WTC11 (cell line): ENCODE measurements at regions of chr18 and their contacts with region 1.

Region 1: DNA sequence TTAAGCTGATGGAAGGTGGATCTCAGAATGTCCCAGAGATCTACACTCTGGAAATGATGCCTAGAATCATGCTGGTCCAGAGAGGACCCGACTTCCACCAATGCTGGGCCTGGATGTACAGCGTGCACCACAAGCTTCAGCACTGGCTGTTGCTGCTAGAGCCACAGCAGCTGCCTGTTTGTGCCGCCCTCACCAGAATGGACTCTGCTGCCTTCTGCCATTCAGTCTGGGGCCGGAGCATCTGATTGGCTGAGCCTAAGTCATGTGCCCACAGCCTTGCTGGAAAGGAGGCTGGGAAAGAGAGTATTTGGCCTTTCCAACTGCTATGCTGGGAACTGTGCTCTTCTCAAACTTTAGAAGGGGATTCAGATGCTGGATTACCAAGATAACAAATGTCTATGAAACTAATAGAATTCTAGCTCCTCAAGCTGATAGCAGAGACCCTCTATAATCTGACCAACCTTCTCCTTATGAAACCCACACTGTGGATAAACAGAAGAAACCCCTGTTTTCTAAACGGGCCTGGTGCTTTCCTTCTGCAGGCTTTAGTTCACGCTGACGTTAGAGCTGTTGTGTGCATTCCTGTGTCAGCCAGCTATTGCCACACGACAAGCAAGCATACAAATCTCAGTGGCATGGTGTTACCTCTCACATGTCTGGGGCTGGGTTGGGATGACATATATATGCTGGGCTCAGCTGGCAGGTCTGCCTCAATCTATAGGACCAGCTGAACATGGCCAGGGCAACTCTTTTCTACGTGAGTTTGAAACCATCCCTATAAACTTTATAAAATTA is 4.1 kb upstream of the LOXHD1 start:
- DNase-seq: peak; percentile 67
- ATAC-seq: peak; percentile 62
- H3K4me3 Mint-ChIP-seq: no peak overlapping the region
- H3K27ac Mint-ChIP-seq: no peak overlapping the region
- H3K4me1 Mint-ChIP-seq: peaks cover 19% of the 10 kb centered on the region
- H3K27me3 Mint-ChIP-seq: peaks cover 7% of the 10 kb centered on the region
- CTCF ChIP-seq: no peak

Region 2: GRCh38 chr18:46320928-46321711 is 340.0 kb before region 1 on chr18:
- CTCF ChIA-PET with region 1: interaction called, 12 read pairs
- POLR2A ChIA-PET with region 1: no interaction called
- DNase-seq: no peak
- ATAC-seq: no peak
- H3K4me3 Mint-ChIP-seq: no peak overlapping the region
- H3K27ac Mint-ChIP-seq: no peak overlapping the region; the same call in 1 of the 2 replicates
- H3K4me1 Mint-ChIP-seq: peaks cover 35% of the 10 kb centered on the region
- H3K27me3 Mint-ChIP-seq: no peaks in the 10 kb centered on the region; the same call in 1 of the 2 replicates
- CTCF ChIP-seq: no peak

Region 3: GRCh38 chr18:46445914-46446313 is 215.2 kb before region 1 on chr18:
- CTCF ChIA-PET with region 1: interaction called, 13 read pairs
- POLR2A ChIA-PET with region 1: no interaction called
- DNase-seq: no peak
- ATAC-seq: no peak
- H3K4me3 Mint-ChIP-seq: no peak overlapping the region
- H3K27ac Mint-ChIP-seq: no peak overlapping the region
- H3K4me1 Mint-ChIP-seq: peaks cover 33% of the 10 kb centered on the region
- H3K27me3 Mint-ChIP-seq: peaks cover 12% of the 10 kb centered on the region
- CTCF ChIP-seq: no peak

Region 4: DNA sequence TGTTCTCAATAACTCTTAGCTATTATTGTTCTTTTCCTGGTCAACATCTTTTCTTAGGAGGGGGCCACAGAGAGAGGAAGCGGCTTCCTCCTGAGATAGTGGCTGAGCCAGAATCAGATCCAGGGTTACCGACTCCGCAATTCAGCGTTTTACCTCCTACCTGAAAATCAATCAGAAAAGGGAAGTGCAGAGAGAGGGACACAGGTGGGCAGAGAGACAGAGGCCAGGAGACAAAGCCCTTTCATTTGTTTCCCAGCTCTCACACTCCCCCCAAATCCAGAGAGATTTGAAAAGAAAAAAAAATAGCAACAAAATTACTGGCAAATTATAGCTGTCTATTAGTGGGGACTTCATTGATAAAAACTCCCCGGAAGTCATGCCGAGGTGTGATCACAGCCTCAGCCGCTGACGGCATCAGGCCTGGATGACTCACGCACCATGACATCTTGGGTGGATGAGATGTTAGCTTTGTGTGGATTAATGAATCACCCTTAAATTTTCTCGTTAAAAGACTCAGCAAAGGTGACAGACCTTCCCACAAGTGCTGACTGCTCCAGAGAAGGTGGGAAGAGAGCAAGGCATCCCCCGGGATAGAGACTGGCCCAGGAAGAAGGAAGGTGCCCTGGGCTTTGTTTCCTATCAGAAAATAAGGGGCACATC is 124.8 kb before region 1 on chr18:
- CTCF ChIA-PET with region 1: interaction called, 20 read pairs
- POLR2A ChIA-PET with region 1: no interaction called
- DNase-seq: no peak
- ATAC-seq: no peak
- H3K4me3 Mint-ChIP-seq: no peak overlapping the region
- H3K27ac Mint-ChIP-seq: no peak overlapping the region
- H3K4me1 Mint-ChIP-seq: no peaks in the 10 kb centered on the region
- H3K27me3 Mint-ChIP-seq: no peaks in the 10 kb centered on the region
- CTCF ChIP-seq: no peak

Region 5: GRCh38 chr18:46622999-46623398 is 38.2 kb before region 1 on chr18:
- CTCF ChIA-PET with region 1: interaction called, 28 read pairs
- POLR2A ChIA-PET with region 1: no interaction called
- DNase-seq: no peak
- ATAC-seq: no peak
- H3K4me3 Mint-ChIP-seq: no peak overlapping the region
- H3K27ac Mint-ChIP-seq: no peak overlapping the region
- H3K4me1 Mint-ChIP-seq: peaks cover 9% of the 10 kb centered on the region
- H3K27me3 Mint-ChIP-seq: no peaks in the 10 kb centered on the region
- CTCF ChIP-seq: no peak

Region 6: DNA sequence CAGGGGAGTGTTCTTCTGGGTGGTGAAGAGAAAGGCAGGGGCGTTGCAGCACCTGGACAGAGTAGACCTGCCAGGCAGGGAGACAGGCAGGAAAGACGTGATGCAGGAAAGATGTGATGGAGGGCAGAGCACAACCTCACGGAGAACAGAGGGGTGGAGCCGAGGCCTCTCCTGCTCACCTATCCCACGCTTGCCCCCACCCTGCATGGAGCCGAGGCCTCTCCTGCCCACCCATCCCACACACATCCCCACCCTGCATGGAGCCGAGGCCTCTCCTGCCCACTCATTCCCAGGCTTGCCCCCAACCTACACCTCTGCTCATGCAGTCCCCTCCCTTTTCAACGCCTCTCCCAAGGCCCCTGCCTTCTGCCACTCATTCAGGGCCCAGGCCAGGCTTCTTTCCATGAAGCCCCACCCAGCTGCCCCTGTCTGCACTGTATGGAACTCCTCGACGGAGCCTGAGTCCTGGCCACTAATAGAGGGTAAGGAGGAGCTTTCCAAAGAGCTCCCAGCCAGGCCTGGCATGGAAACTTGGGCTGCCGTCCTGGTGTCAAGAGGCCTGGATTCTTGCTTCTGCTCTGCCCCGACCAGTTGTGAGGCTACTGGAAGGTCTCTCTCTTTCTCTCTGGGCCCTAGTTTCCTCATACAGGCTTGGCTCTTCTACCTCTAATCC is 27.8 kb after region 1 on chr18:
- CTCF ChIA-PET with region 1: interaction called, 20 read pairs
- POLR2A ChIA-PET with region 1: no interaction called
- DNase-seq: no peak
- ATAC-seq: peak; percentile 61
- H3K4me3 Mint-ChIP-seq: no peak overlapping the region
- H3K27ac Mint-ChIP-seq: no peak overlapping the region
- H3K4me1 Mint-ChIP-seq: peaks cover 22% of the 10 kb centered on the region
- H3K27me3 Mint-ChIP-seq: no peaks in the 10 kb centered on the region
- CTCF ChIP-seq: no peak